ENCODE measurements at regions of chrX and their contacts with region 1.

Region 1: GRCh38 chrX:15686818-15687685 is 22.4 kb upstream of the CLTRN start:
- DNase-seq: peak; percentile 74
- ATAC-seq: peak; percentile 76
- H3K4me3 ChIP-seq: no peak overlapping the region
- H3K4me3 Mint-ChIP-seq: no peak overlapping the region
- H3K27ac ChIP-seq: no peak overlapping the region
- H3K27ac Mint-ChIP-seq: no peak overlapping the region
- H3K4me1 ChIP-seq: peaks cover 3 to 4% of the 10 kb centered on the region in 2 donors
- H3K4me1 Mint-ChIP-seq: peaks cover 5% of the 10 kb centered on the region
- H3K27me3 ChIP-seq: no peaks in the 10 kb centered on the region
- H3K27me3 Mint-ChIP-seq: no peaks in the 10 kb centered on the region
- CTCF ChIP-seq: peak; percentile 71

Region 2: DNA sequence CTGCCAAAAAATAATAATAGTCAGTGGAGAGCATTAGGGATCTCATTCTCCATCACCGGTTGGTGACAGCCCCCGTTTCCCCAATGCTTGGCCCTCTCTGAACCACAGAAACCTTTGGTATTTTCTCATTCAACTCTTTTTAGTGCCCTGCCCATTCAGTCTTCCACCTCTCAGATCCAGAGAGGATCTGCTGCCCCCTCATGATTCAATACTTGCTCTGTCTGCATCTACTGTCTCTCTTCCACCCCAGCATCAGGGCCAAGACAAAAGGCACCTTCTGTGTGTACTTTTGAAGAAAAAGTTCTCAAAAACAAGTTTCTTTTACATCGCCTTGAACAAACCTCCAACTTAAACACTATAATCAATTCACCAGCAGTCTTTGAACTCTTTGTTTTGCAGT is 41.8 kb before region 1 on chrX:
- CTCF ChIA-PET with region 1: no interaction called
- POLR2A ChIA-PET with region 1: no interaction called
- intact Hi-C with region 1: no loop called
- DNase-seq: no peak
- ATAC-seq: no peak
- H3K4me3 ChIP-seq: no peak overlapping the region
- H3K4me3 Mint-ChIP-seq: no peak overlapping the region
- H3K27ac ChIP-seq: no peak overlapping the region
- H3K27ac Mint-ChIP-seq: no peak overlapping the region
- H3K4me1 ChIP-seq: no peaks in the 10 kb centered on the region
- H3K4me1 Mint-ChIP-seq: no peaks in the 10 kb centered on the region
- H3K27me3 ChIP-seq: peaks cover 0 to 3% (median 0%) of the 10 kb centered on the region in 4 experiments
- H3K27me3 Mint-ChIP-seq: peaks cover 3% of the 10 kb centered on the region
- CTCF ChIP-seq: no peak

Region 3: GRCh38 chrX:15973299-15973698 is 286.2 kb after region 1 on chrX:
- CTCF ChIA-PET with region 1: no interaction called
- POLR2A ChIA-PET with region 1: no interaction called
- intact Hi-C with region 1: loop called (anchors 1 kb)
- DNase-seq: peak; percentile 59
- ATAC-seq: peak; percentile 75
- H3K4me3 ChIP-seq: no peak overlapping the region
- H3K4me3 Mint-ChIP-seq: no peak overlapping the region
- H3K27ac ChIP-seq: no peak overlapping the region
- H3K27ac Mint-ChIP-seq: no peak overlapping the region
- H3K4me1 ChIP-seq: peaks cover 3 to 15% of the 10 kb centered on the region in 2 donors
- H3K4me1 Mint-ChIP-seq: peaks cover 22% of the 10 kb centered on the region
- H3K27me3 ChIP-seq: no peaks in the 10 kb centered on the region
- H3K27me3 Mint-ChIP-seq: no peaks in the 10 kb centered on the region
- CTCF ChIP-seq: peak; percentile 42

Region 4: DNA sequence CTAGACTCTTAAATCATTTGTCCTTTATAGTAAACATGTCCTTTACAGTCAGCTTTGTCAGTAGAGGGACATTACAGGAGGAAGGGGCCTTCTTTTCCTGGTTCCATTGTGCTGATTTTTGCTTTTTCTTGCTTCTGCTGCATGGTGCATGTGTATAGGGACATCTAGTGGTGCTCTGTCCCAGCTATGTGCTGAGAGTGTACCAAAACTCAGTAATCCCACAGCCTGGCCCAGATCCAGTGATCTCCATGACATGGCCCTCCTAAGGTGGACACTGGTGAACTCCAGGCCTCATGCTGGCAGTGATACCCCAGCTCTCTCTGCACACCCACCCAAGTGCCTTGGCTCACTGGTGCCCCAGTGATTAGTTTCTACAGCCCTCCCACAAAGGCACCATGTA is 525.4 kb after region 1 on chrX:
- CTCF ChIA-PET with region 1: no interaction called
- POLR2A ChIA-PET with region 1: no interaction called
- intact Hi-C with region 1: loop called (anchors 2 kb)
- DNase-seq: peak; percentile 4
- ATAC-seq: no peak
- H3K4me3 ChIP-seq: no peak overlapping the region
- H3K4me3 Mint-ChIP-seq: no peak overlapping the region
- H3K27ac ChIP-seq: no peak overlapping the region
- H3K27ac Mint-ChIP-seq: no peak overlapping the region
- H3K4me1 ChIP-seq: no peaks in the 10 kb centered on the region
- H3K4me1 Mint-ChIP-seq: no peaks in the 10 kb centered on the region
- H3K27me3 ChIP-seq: no peaks in the 10 kb centered on the region
- H3K27me3 Mint-ChIP-seq: no peaks in the 10 kb centered on the region
- CTCF ChIP-seq: no peak

Region 5: DNA sequence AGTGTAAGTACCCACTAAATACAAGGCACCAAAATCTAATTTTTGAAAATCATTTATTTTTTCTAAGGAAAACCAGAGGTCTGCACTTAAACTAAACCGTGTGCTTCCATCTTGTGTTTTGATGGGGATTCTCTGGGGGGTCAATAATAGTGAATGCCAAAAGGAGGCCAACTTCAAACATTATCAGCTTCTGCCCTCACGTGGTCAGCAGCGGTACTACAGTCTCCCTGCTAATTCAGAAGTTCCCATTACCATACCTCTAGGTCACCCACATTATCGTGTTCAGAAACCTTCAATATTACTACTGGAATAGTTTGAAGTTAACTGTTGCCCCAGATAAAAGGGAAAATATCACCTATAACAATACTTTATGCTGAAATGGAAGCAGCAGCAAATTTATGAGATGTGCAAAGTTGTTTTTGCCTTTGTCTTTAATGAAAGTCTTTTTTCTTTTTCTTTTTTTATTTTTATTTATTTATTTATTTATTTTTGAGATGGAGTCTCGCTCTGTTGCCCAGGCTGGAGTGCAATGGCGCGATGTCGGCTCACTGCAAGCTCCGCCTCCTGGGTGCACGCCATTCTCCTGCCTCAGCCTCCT is 1008.1 kb after region 1 on chrX:
- CTCF ChIA-PET with region 1: no interaction called
- POLR2A ChIA-PET with region 1: no interaction called
- intact Hi-C with region 1: loop called (anchors 10 kb)
- DNase-seq: peak; percentile 63
- ATAC-seq: peak; percentile 73
- H3K4me3 ChIP-seq: no peak overlapping the region
- H3K4me3 Mint-ChIP-seq: no peak overlapping the region
- H3K27ac ChIP-seq: no peak overlapping the region
- H3K27ac Mint-ChIP-seq: no peak overlapping the region
- H3K4me1 ChIP-seq: no peaks in the 10 kb centered on the region
- H3K4me1 Mint-ChIP-seq: no peaks in the 10 kb centered on the region
- H3K27me3 ChIP-seq: no peaks in the 10 kb centered on the region
- H3K27me3 Mint-ChIP-seq: no peaks in the 10 kb centered on the region
- CTCF ChIP-seq: peak; percentile 77